ENCODE measurements at regions of chr5 and their contacts with region 1.

Region 1: DNA sequence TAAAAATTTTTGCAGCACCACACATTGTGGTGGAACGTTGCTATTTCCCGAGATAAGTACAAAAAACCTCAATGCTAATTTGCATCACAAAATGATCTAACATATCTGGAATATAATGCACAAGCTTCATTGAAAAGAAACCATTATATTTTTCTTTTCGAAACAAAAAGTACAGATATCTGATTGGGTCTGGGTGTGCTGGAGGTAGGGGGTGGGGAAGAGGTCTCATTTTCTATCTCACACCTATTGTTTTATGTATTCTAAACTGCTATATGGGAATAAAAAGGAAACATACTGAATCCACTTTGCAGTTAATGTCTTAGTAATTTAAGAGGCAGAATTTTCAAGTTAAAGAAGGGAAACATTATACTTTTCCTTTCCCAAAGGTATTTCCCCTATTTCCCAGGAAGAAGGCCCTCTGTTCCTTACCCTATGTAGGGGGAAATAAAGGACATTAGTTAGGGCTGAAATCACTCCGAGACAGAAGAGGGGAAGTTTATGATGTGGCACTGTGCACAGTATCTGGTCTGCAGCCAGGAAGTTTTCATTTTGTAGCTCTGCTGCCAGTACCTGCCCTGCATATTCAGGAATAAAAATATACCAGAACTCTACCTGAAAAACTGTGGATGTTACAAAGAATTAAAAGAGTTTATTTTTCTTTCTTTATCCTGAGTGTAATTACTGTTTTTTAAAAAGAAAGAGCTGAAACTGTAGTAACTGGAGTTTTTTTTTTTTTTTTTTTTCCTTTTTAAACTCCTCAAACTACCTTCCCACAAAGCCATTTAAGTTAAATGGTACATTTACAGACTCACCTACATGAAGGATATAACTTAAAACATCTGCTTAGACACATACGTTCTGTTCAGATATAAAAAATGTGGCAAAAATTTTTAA is 7.4 kb downstream of the MEF2C start:
- DNase-seq: peak; percentile 42
- ATAC-seq: peak; percentile 57
- H3K4me3 ChIP-seq: peak overlapping the region in 3 of 5 experiments; percentile 1 to 45 (median 2)
- H3K4me3 Mint-ChIP-seq: peak overlapping the region; percentile 72
- H3K27ac ChIP-seq: peak overlapping the region; percentile 8 to 69
- H3K27ac Mint-ChIP-seq: peak overlapping the region; percentile 77
- H3K4me1 ChIP-seq: peaks cover 35 to 73% of the 10 kb centered on the region in 2 donors
- H3K4me1 Mint-ChIP-seq: peaks cover 69% of the 10 kb centered on the region
- H3K27me3 ChIP-seq: no peaks in the 10 kb centered on the region
- H3K27me3 Mint-ChIP-seq: no peaks in the 10 kb centered on the region
- CTCF ChIP-seq: no peak

Region 2: GRCh38 chr5:88833371-88834130 is 42.0 kb before region 1 on chr5:
- CTCF ChIA-PET with region 1: interaction called, 11 read pairs
- POLR2A ChIA-PET with region 1: no interaction called
- intact Hi-C with region 1: no loop called
- DNase-seq: peak; percentile 65
- ATAC-seq: peak; percentile 66
- H3K4me3 ChIP-seq: peak overlapping the region in 3 of 5 experiments; percentile 1 to 47 (median 16)
- H3K4me3 Mint-ChIP-seq: peak overlapping the region; percentile 87
- H3K27ac ChIP-seq: peak overlapping the region; percentile 58 to 94
- H3K27ac Mint-ChIP-seq: peak overlapping the region; percentile 94
- H3K4me1 ChIP-seq: peaks cover 71 to 86% of the 10 kb centered on the region in 2 donors
- H3K4me1 Mint-ChIP-seq: peaks cover 77% of the 10 kb centered on the region
- H3K27me3 ChIP-seq: no peaks in the 10 kb centered on the region
- H3K27me3 Mint-ChIP-seq: no peaks in the 10 kb centered on the region
- CTCF ChIP-seq: no peak

Region 3: DNA sequence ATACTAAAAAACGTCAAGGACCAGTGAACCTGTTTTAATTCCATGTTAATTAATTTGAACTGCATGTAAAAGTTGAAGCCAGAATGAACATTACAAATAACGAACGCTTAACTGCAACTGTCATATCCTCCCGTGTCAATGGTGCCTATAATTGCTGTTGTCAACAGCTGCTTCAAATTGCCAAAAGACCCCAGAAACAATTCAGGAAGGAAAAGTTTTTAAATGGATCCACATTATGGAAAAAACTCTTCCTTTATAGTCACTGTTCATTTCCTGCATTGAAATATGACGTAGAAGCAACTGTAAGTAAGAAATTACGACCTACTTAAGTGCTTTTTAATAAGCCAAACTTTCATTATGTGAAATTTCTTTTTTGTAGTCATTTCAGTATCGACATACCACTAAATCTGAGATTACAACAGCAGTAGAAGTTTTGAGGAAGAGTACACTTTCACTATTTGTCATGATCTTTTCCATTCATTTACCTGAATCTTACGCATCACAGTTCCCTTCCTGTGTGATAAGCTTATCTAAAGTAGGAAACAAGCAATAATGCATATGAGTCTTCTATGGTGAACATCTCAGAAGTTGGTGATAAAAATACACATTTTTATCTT is 30.4 kb before region 1 on chr5:
- CTCF ChIA-PET with region 1: interaction called, 5 read pairs
- POLR2A ChIA-PET with region 1: no interaction called
- intact Hi-C with region 1: loop called (anchors 2 kb)
- DNase-seq: peak; percentile 64
- ATAC-seq: peak; percentile 69
- H3K4me3 ChIP-seq: no peak overlapping the region
- H3K4me3 Mint-ChIP-seq: peak overlapping the region; percentile 76
- H3K27ac ChIP-seq: peak overlapping the region; percentile 12 to 51
- H3K27ac Mint-ChIP-seq: peak overlapping the region; percentile 87
- H3K4me1 ChIP-seq: peaks cover 23 to 43% of the 10 kb centered on the region in 2 donors
- H3K4me1 Mint-ChIP-seq: peaks cover 65% of the 10 kb centered on the region
- H3K27me3 ChIP-seq: no peaks in the 10 kb centered on the region
- H3K27me3 Mint-ChIP-seq: no peaks in the 10 kb centered on the region
- CTCF ChIP-seq: no peak

Region 4: GRCh38 chr5:88862547-88863175 is 12.9 kb before region 1 on chr5:
- CTCF ChIA-PET with region 1: interaction called, 5 read pairs
- POLR2A ChIA-PET with region 1: no interaction called
- intact Hi-C with region 1: loop called (anchors 2 kb)
- DNase-seq: no peak
- ATAC-seq: no peak
- H3K4me3 ChIP-seq: no peak overlapping the region
- H3K4me3 Mint-ChIP-seq: no peak overlapping the region
- H3K27ac ChIP-seq: peak overlapping the region in 1 of 2 donors; percentile 37
- H3K27ac Mint-ChIP-seq: peak overlapping the region; percentile 63
- H3K4me1 ChIP-seq: no peaks in the 10 kb centered on the region
- H3K4me1 Mint-ChIP-seq: peaks cover 39% of the 10 kb centered on the region
- H3K27me3 ChIP-seq: no peaks in the 10 kb centered on the region
- H3K27me3 Mint-ChIP-seq: no peaks in the 10 kb centered on the region
- CTCF ChIP-seq: no peak

Region 5: GRCh38 chr5:88889189-88890069 is 13.8 kb after region 1 on chr5:
- CTCF ChIA-PET with region 1: interaction called, 3 read pairs
- POLR2A ChIA-PET with region 1: interaction called, 10 read pairs
- intact Hi-C with region 1: loop called (anchors 2 kb)
- DNase-seq: peak; percentile 79
- ATAC-seq: peak; percentile 60
- H3K4me3 ChIP-seq: peak overlapping the region; percentile 77 to 93 (median 80)
- H3K4me3 Mint-ChIP-seq: peak overlapping the region; percentile 94
- H3K27ac ChIP-seq: peak overlapping the region; percentile 86 to 90
- H3K27ac Mint-ChIP-seq: peak overlapping the region; percentile 96
- H3K4me1 ChIP-seq: peaks cover 33 to 44% of the 10 kb centered on the region in 2 donors
- H3K4me1 Mint-ChIP-seq: peaks cover 67% of the 10 kb centered on the region
- H3K27me3 ChIP-seq: no peaks in the 10 kb centered on the region
- H3K27me3 Mint-ChIP-seq: no peaks in the 10 kb centered on the region
- CTCF ChIP-seq: no peak

Region 6: DNA sequence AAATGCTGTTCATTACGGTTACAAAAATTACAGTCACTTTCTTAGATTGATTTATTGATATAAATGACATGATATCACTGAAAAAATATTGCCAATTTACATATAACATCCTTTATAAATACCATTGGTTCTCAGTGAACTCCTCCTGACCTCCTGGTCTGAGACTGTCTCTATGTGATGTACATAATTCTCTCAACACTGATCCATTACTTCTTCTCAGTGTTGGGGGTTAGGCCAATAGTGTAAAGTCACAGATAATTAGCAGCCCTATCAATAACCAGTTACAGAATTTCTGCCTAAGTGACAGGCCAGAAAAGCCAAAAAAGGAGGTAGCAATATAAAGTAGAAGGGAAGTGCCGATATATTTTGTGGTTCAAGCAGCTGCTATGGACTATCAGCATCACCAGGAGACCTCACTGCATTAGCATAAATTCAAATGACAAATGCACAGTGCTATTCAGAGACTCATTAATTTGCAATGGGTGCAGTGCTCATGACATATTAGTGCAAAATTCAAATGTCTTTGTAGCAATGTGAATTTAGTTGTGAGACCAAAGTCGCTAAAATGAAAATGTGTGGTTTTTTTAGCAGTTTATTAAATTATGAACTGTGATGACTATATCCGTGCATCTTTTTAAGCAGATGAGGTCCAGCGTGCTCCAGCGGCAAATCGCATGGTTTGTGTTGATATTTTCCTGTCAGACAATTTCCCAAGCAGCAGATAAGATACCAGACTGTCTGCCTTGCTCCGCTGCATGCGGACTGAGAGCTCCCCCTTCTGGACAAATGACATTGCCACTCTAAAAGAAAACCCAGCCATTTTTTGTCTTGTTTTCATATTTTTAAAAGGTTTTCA is 1389.3 kb after region 1 on chr5:
- CTCF ChIA-PET with region 1: no interaction called
- POLR2A ChIA-PET with region 1: no interaction called
- intact Hi-C with region 1: loop called (anchors 5 kb)
- DNase-seq: peak; percentile 79
- ATAC-seq: peak; percentile 58
- H3K4me3 ChIP-seq: no peak overlapping the region
- H3K4me3 Mint-ChIP-seq: peak overlapping the region; percentile 64
- H3K27ac ChIP-seq: no peak overlapping the region
- H3K27ac Mint-ChIP-seq: no peak overlapping the region
- H3K4me1 ChIP-seq: peaks cover 6 to 7% of the 10 kb centered on the region in 2 donors
- H3K4me1 Mint-ChIP-seq: peaks cover 7% of the 10 kb centered on the region
- H3K27me3 ChIP-seq: no peaks in the 10 kb centered on the region
- H3K27me3 Mint-ChIP-seq: peaks cover 2% of the 10 kb centered on the region
- CTCF ChIP-seq: peak; percentile 98